ENCODE measurements at regions of chr4 and their contacts with region 1.

Region 1: GRCh38 chr4:11954093-11954492 is 525.4 kb upstream of the HS3ST1 start:
- DNase-seq: peak; percentile 8
- H3K4me3 ChIP-seq: no peak overlapping the region
- H3K27ac ChIP-seq: no peak overlapping the region
- H3K4me1 ChIP-seq: no peaks in the 10 kb centered on the region
- H3K27me3 ChIP-seq: no peaks in the 10 kb centered on the region
- CTCF ChIP-seq: peak; percentile 37 to 60

Region 2: GRCh38 chr4:11805842-11806241 is 148.3 kb before region 1 on chr4:
- CTCF ChIA-PET with region 1: no interaction called
- dilution Hi-C with region 1: no loop called
- in situ Hi-C with region 1: no loop called
- intact Hi-C with region 1: loop called (anchors 1 kb)
- DNase-seq: peak; percentile 28
- H3K4me3 ChIP-seq: no peak overlapping the region
- H3K27ac ChIP-seq: no peak overlapping the region
- H3K4me1 ChIP-seq: no peaks in the 10 kb centered on the region
- H3K27me3 ChIP-seq: no peaks in the 10 kb centered on the region
- CTCF ChIP-seq: peak; percentile 55 to 74

Region 3: GRCh38 chr4:12949719-12950490 is 995.8 kb after region 1 on chr4:
- CTCF ChIA-PET with region 1: no interaction called
- dilution Hi-C with region 1: no loop called
- in situ Hi-C with region 1: no loop called
- intact Hi-C with region 1: no loop called
- DNase-seq: no peak
- H3K4me3 ChIP-seq: no peak overlapping the region
- H3K27ac ChIP-seq: no peak overlapping the region
- H3K4me1 ChIP-seq: no peaks in the 10 kb centered on the region
- H3K27me3 ChIP-seq: no peaks in the 10 kb centered on the region
- CTCF ChIP-seq: no peak

Measured in mammary epithelial cell (primary cell).